IMR-90 (cell line): ENCODE measurements at regions of chr2 and their contacts with region 1.

Region 1: DNA sequence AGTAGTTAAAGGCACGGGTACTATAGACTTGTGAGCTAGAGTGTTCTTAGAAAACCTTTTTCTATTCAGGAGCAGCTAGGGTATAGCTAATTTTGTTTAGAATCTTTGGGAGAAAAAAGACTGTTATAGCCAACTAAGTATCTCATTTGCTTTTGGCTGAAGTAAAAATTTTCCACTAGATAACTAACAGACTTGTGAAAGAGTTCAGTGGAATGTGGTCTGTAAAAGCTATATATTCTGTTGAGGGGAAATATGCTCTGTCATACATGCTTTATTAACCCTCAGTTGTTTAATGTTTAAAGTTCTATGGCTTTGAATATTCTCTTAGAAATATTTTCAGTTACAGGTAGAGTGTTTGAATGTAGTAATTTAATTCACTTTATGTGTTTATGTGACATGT is 49.7 kb downstream of the RIF1 start:
- DNase-seq: peak; percentile 29
- ATAC-seq: peak; percentile 51
- H3K4me3 ChIP-seq: no peak overlapping the region
- H3K27ac ChIP-seq: no peak overlapping the region
- H3K4me1 ChIP-seq: no peaks in the 10 kb centered on the region
- H3K27me3 ChIP-seq: no peaks in the 10 kb centered on the region
- CTCF ChIP-seq: no peak
- POLR2A ChIP-seq: no peak
- RAD21 ChIP-seq: no peak

Region 2: DNA sequence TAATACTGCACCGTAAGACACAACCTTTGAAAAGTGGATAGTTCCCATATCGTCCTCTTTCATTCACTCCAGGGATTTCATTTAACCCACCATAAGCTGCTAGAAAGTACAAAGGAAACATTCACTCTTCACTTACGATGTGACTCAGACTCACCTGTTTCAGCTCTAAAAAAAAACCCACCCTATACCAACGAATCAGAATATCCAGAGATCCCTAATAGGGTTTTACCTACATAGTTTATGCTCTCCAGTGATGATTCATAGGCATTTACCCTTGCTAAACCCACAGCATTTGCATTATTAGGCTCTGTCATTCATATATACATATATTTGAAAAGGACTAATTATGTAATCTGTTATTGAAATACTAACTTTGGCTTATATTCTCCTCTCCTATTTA is 1197.7 kb after region 1 on chr2:
- CTCF ChIA-PET with region 1: no interaction called
- POLR2A ChIA-PET with region 1: no interaction called
- dilution Hi-C with region 1: no loop called
- in situ Hi-C with region 1: loop called (anchors 25 kb)
- intact Hi-C with region 1: loop called (anchors 10 kb)
- DNase-seq: no peak
- ATAC-seq: no peak
- H3K4me3 ChIP-seq: no peak overlapping the region
- H3K27ac ChIP-seq: no peak overlapping the region
- H3K4me1 ChIP-seq: no peaks in the 10 kb centered on the region
- H3K27me3 ChIP-seq: no peaks in the 10 kb centered on the region
- CTCF ChIP-seq: no peak
- POLR2A ChIP-seq: no peak
- RAD21 ChIP-seq: no peak

Region 3: GRCh38 chr2:152664703-152665102 is 1205.3 kb after region 1 on chr2:
- CTCF ChIA-PET with region 1: no interaction called
- POLR2A ChIA-PET with region 1: no interaction called
- dilution Hi-C with region 1: no loop called
- in situ Hi-C with region 1: loop called (anchors 25 kb)
- intact Hi-C with region 1: loop called (anchors 10 kb)
- DNase-seq: no peak
- ATAC-seq: no peak
- H3K4me3 ChIP-seq: no peak overlapping the region
- H3K27ac ChIP-seq: no peak overlapping the region
- H3K4me1 ChIP-seq: no peaks in the 10 kb centered on the region
- H3K27me3 ChIP-seq: no peaks in the 10 kb centered on the region
- CTCF ChIP-seq: no peak
- POLR2A ChIP-seq: no peak
- RAD21 ChIP-seq: no peak